Caco-2 (cell line): ENCODE measurements at regions of chr11 and their contacts with region 1.

Region 1: DNA sequence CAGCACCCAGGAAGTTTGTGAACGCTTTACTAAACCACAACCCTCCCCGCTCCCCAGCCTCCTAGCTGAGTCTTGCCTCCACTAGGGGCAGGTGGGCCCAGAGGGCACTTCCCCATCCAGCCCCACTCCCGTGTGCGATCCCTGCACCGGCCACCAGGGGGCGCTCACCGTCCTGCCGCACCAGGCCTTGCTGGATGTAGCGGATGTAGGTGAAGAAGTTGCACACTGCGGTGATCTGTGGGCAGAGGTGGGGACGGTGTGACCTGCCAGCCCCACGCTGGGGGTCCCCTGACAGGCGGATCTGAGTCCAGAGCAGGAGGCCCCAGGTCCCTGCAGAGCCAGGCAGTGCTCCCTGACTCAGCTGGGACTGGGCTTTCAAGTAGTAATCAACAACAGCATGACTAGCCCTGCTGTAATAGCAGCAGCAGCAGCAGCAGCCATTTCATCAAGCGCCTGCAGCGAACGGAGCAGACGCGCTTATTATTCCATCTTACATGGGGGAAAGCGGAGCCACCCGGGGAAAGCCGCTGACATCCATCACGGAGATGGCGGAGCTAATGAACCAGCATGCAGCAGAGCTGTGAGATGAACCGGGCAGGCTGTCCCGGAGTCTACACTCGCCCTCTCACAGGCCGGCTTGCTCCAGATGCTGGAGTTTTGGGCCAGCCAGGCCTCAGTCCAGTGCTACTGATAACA is 7.9 kb upstream of the FADS3 start:
- DNase-seq: peak; percentile 89 to 96
- H3K4me3 ChIP-seq: no peak overlapping the region
- H3K4me3 Mint-ChIP-seq: no peak overlapping the region
- H3K27ac Mint-ChIP-seq: no peak overlapping the region
- H3K4me1 ChIP-seq: no peaks in the 10 kb centered on the region
- H3K4me1 Mint-ChIP-seq: no peaks in the 10 kb centered on the region
- H3K27me3 ChIP-seq: no peaks in the 10 kb centered on the region
- H3K27me3 Mint-ChIP-seq: no peaks in the 10 kb centered on the region
- CTCF ChIP-seq: peak; percentile 100

Region 2: GRCh38 chr11:61871158-61871597 is 28.1 kb before region 1 on chr11:
- CTCF ChIA-PET with region 1: interaction called, 8 read pairs
- POLR2A ChIA-PET with region 1: no interaction called
- intact Hi-C with region 1: loop called (anchors 1 kb)
- DNase-seq: peak; percentile 64 to 79
- H3K4me3 ChIP-seq: no peak overlapping the region
- H3K4me3 Mint-ChIP-seq: no peak overlapping the region
- H3K27ac Mint-ChIP-seq: no peak overlapping the region
- H3K4me1 ChIP-seq: peaks cover 12% of the 10 kb centered on the region
- H3K4me1 Mint-ChIP-seq: no peaks in the 10 kb centered on the region
- H3K27me3 ChIP-seq: no peaks in the 10 kb centered on the region
- H3K27me3 Mint-ChIP-seq: no peaks in the 10 kb centered on the region
- CTCF ChIP-seq: peak; percentile 83 to 86

Region 3: GRCh38 chr11:61923166-61924063 is 24.1 kb after region 1 on chr11:
- CTCF ChIA-PET with region 1: interaction called, 46 read pairs
- POLR2A ChIA-PET with region 1: interaction called, 3 read pairs
- intact Hi-C with region 1: loop called (anchors 1 kb)
- DNase-seq: peak; percentile 89 to 92
- H3K4me3 ChIP-seq: no peak overlapping the region
- H3K4me3 Mint-ChIP-seq: peak overlapping the region; percentile 68
- H3K27ac Mint-ChIP-seq: peak overlapping the region; percentile 98
- H3K4me1 ChIP-seq: peaks cover 48% of the 10 kb centered on the region
- H3K4me1 Mint-ChIP-seq: peaks cover 49% of the 10 kb centered on the region
- H3K27me3 ChIP-seq: no peaks in the 10 kb centered on the region
- H3K27me3 Mint-ChIP-seq: no peaks in the 10 kb centered on the region
- CTCF ChIP-seq: no peak

Region 4: GRCh38 chr11:61954851-61955421 is 55.6 kb after region 1 on chr11:
- CTCF ChIA-PET with region 1: interaction called, 274 read pairs
- POLR2A ChIA-PET with region 1: interaction called, 4 read pairs
- intact Hi-C with region 1: no loop called
- DNase-seq: peak; percentile 67 to 79
- H3K4me3 ChIP-seq: peak overlapping the region; percentile 43
- H3K4me3 Mint-ChIP-seq: peak overlapping the region; percentile 71
- H3K27ac Mint-ChIP-seq: peak overlapping the region; percentile 66
- H3K4me1 ChIP-seq: peaks cover 11% of the 10 kb centered on the region
- H3K4me1 Mint-ChIP-seq: no peaks in the 10 kb centered on the region
- H3K27me3 ChIP-seq: no peaks in the 10 kb centered on the region
- H3K27me3 Mint-ChIP-seq: no peaks in the 10 kb centered on the region
- CTCF ChIP-seq: peak in 1 of 2 experiments; percentile 37

Region 5: GRCh38 chr11:62054484-62055121 is 155.3 kb after region 1 on chr11:
- CTCF ChIA-PET with region 1: interaction called, 10 read pairs
- POLR2A ChIA-PET with region 1: no interaction called
- intact Hi-C with region 1: loop called (anchors 1 kb)
- DNase-seq: peak; percentile 83 to 85
- H3K4me3 ChIP-seq: no peak overlapping the region
- H3K4me3 Mint-ChIP-seq: peak overlapping the region; percentile 25
- H3K27ac Mint-ChIP-seq: peak overlapping the region; percentile 81
- H3K4me1 ChIP-seq: 0 out of 2 replicates have a peak, but pooled peaks cover 5% of the 10 kb centered on the region
- H3K4me1 Mint-ChIP-seq: no peaks in the 10 kb centered on the region
- H3K27me3 ChIP-seq: no peaks in the 10 kb centered on the region; the same call in 1 of the 2 replicates
- H3K27me3 Mint-ChIP-seq: no peaks in the 10 kb centered on the region
- CTCF ChIP-seq: peak; percentile 78 to 93